Activated B cell treated with CpG ODN at 0.5 μM for 24 hours (primary cell): ENCODE measurements at regions of chr11 and their contacts with region 1.

Region 1: GRCh38 chr11:3841426-3842350 is 929 bp upstream of the RHOG start:
- DNase-seq: peak; percentile 96
- ATAC-seq: no peak
- H3K4me3 Mint-ChIP-seq: peak overlapping the region; percentile 91
- H3K27ac Mint-ChIP-seq: peak overlapping the region; percentile 95
- H3K4me1 Mint-ChIP-seq: peaks cover 46% of the 10 kb centered on the region
- H3K27me3 Mint-ChIP-seq: no peaks in the 10 kb centered on the region
- CTCF ChIP-seq: no peak

Region 2: DNA sequence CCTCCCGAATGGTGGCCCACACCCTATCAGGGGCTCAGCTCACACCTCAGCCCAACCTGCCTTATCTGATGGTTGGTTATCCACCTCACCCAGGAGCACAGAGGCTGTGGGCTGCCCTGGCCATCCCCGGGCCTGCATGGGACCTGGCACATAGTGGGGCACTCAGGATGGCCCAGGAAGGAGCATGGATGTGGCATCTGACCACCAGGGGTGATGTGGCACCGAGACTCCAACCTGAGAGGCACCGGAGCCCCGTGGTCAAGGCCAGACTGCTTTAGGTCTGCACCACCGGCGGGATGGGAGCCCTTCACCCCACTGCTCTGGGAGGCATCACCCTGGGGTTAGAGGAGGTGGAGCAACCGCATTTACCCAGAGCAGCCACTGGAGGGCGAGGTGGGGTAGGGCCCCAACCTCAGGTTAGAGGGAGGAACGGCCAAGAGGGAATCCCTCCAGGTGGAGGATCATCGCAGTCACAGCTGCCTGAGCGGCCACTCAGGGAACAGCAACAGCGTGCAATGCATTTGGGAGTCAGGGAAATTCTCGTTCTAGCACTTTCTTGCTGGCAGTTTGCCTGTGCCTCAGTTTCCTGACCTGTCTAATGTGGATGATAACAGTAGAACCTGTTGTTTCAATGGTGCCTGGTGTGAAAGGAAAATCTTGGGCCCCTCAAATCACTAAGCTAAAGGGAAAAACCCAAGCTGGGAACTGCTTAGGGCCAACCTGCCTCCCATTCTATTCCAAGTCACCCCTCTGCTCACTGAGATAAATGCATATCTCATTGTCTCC is 731.6 kb before region 1 on chr11:
- CTCF ChIA-PET with region 1: no interaction called
- POLR2A ChIA-PET with region 1: no interaction called
- intact Hi-C with region 1: no loop called
- DNase-seq: peak; percentile 12
- ATAC-seq: peak; percentile 42
- H3K4me3 Mint-ChIP-seq: no peak overlapping the region
- H3K27ac Mint-ChIP-seq: no peak overlapping the region
- H3K4me1 Mint-ChIP-seq: no peaks in the 10 kb centered on the region
- H3K27me3 Mint-ChIP-seq: peaks cover 6% of the 10 kb centered on the region
- CTCF ChIP-seq: no peak

Region 3: GRCh38 chr11:3781423-3781822 is 60.3 kb before region 1 on chr11:
- CTCF ChIA-PET with region 1: interaction called, 9 read pairs
- POLR2A ChIA-PET with region 1: interaction called, 10 read pairs
- intact Hi-C with region 1: loop called (anchors 2 kb)
- DNase-seq: no peak
- ATAC-seq: no peak
- H3K4me3 Mint-ChIP-seq: no peak overlapping the region
- H3K27ac Mint-ChIP-seq: peak overlapping the region; percentile 56
- H3K4me1 Mint-ChIP-seq: peaks cover 46% of the 10 kb centered on the region
- H3K27me3 Mint-ChIP-seq: no peaks in the 10 kb centered on the region
- CTCF ChIP-seq: no peak

Region 4: DNA sequence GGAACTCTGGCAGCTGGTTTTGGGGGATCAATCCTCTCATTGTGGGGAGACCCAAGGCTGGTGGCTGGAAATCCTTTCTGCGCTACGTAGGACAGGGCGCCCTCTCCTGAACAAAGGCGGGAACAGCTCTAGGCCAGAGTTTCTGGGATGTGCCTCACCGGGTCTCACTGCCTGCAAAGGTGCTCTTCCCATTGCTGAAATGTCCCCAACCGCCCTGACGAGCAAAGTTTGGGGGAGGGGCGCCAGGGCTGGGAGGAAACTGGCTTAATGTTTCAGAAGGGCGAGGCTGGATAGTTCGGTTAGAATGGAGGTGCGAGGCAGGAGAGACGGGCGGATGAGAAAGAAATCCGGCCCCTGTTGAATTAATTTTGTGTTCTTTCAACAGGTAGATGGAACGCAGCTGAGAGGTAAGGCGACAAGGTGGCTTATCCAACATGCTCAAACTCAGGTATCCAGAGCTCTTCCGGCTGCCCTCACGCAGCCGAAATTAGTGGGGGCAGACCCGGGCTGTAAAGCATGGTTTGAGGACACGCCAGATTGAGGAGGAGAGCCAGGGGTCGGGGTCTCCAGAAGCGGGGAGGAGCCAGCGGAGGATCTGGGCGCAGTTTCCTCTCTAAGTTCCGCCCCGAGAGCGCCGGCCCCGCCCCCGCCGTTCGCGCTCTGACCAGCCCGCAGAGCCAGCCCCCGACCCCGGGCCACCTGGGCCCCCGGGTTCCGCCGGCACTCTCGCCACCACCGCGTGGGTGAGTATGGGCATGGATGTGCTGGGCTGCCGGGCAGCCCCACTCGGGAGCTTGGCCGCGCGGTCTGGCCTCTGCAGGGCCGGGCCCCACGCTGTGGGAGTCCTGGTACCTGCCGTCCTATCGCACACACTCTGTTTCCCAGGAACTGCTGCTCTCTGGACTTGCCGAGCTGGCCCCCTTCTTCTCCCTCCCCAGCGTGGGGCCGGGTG is 33.5 kb before region 1 on chr11 and contains the start of gene PGAP2:
- CTCF ChIA-PET with region 1: interaction called, 36 read pairs
- POLR2A ChIA-PET with region 1: interaction called, 46 read pairs
- intact Hi-C with region 1: loop called (anchors 1 kb)
- DNase-seq: peak; percentile 67
- ATAC-seq: peak; percentile 85
- H3K4me3 Mint-ChIP-seq: peak within 1 kb of the TSS; percentile 94
- H3K27ac Mint-ChIP-seq: peak within 1 kb of the TSS; percentile 68
- H3K4me1 Mint-ChIP-seq: peaks cover 13% of the 10 kb centered on the region
- H3K27me3 Mint-ChIP-seq: no peaks in the 10 kb centered on the region
- CTCF ChIP-seq: no peak
- total RNA-seq, gene PGAP2: 19.7 and 25.0 TPM in 2 replicates

Region 5: GRCh38 chr11:3867209-3868091 is 25.8 kb after region 1 on chr11:
- CTCF ChIA-PET with region 1: interaction called, 3 read pairs
- POLR2A ChIA-PET with region 1: interaction called, 22 read pairs
- intact Hi-C with region 1: no loop called
- DNase-seq: no peak
- ATAC-seq: peak; percentile 49
- H3K4me3 Mint-ChIP-seq: peak overlapping the region; percentile 12
- H3K27ac Mint-ChIP-seq: peak overlapping the region; percentile 69
- H3K4me1 Mint-ChIP-seq: peaks cover 87% of the 10 kb centered on the region
- H3K27me3 Mint-ChIP-seq: no peaks in the 10 kb centered on the region
- CTCF ChIP-seq: no peak

Region 6: DNA sequence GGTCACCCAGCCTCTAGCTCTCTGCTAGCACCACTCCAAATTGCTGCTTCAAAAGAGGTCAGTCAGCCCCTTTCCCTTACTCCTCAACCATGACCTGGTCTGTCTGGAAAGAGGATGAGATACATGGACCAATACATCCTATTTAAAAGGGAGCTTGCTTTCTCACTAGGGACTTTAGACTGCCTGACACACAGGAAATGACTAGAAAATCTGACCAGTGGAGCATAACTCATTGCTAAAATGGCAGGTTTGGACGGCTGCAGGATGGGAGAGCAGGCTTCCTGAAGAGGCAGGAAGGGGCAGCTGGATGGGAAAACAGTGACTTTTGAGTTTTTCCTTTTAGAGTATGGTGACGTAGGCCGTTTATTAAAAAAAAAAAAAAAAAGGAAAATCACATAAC is 39.0 kb after region 1 on chr11:
- CTCF ChIA-PET with region 1: interaction called, 5 read pairs
- POLR2A ChIA-PET with region 1: interaction called, 29 read pairs
- intact Hi-C with region 1: no loop called
- DNase-seq: no peak
- ATAC-seq: peak; percentile 80
- H3K4me3 Mint-ChIP-seq: peak overlapping the region; percentile 60
- H3K27ac Mint-ChIP-seq: peak overlapping the region; percentile 87
- H3K4me1 Mint-ChIP-seq: peaks cover 85% of the 10 kb centered on the region
- H3K27me3 Mint-ChIP-seq: no peaks in the 10 kb centered on the region
- CTCF ChIP-seq: no peak

Region 7: DNA sequence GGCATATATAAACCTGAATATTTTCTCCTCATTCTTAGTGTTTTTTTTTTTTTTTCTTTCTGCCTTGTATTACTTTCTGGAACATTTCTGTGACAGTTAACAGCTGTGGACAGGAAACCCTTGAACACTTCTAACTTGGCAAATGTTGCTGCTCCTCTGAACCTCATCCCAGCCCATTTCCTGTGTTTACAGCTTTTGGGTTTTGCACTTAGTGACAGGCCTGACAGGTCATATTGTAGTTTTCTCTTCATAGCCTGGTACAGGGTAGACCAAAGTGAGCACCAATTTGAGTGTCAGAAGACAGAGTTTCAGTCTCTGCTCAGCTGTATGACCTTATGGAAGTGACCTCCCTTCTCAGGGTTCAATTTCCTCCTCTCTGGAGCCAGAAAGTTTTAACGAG is 105.4 kb after region 1 on chr11:
- CTCF ChIA-PET with region 1: interaction called, 5 read pairs
- POLR2A ChIA-PET with region 1: interaction called, 10 read pairs
- intact Hi-C with region 1: no loop called
- DNase-seq: no peak
- ATAC-seq: peak; percentile 59
- H3K4me3 Mint-ChIP-seq: peak overlapping the region; percentile 13
- H3K27ac Mint-ChIP-seq: peak overlapping the region; percentile 70
- H3K4me1 Mint-ChIP-seq: peaks cover 92% of the 10 kb centered on the region
- H3K27me3 Mint-ChIP-seq: no peaks in the 10 kb centered on the region
- CTCF ChIP-seq: no peak

Region 8: DNA sequence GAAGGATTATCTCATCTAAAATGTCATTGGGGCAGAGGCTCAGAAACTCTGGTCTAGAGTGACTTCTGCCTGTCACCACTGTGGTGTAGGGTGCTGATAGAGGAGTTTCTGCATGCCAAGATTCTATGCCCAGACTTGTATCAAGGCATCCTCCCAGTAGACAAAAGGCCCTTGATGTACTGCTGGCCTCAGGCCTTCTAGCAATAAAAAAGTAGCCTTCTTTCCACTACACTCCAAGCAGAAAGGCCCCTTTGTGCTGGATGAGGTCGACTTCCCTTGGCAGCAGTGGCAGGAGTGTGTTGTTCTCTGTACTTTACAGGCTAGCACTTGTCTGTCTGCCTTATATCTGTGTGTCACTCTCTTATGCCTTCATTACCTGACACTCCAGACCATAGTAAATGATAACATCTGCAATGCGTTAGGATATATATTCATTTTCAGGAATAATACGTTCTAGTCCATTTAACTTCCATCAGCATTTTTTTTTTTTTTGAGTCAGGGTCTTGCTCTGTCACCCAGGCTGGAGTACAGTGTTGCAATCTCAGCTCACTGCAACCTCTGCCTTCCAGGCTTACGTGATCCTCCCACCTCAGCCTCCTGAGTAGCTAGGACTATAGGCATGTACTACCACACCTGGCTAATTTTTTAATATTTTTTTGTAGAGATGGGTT is 203.4 kb after region 1 on chr11:
- CTCF ChIA-PET with region 1: no interaction called
- POLR2A ChIA-PET with region 1: no interaction called
- intact Hi-C with region 1: no loop called
- DNase-seq: no peak
- ATAC-seq: no peak
- H3K4me3 Mint-ChIP-seq: no peak overlapping the region
- H3K27ac Mint-ChIP-seq: no peak overlapping the region
- H3K4me1 Mint-ChIP-seq: peaks cover 8% of the 10 kb centered on the region
- H3K27me3 Mint-ChIP-seq: no peaks in the 10 kb centered on the region
- CTCF ChIP-seq: no peak

Region 9: GRCh38 chr11:4072668-4073285 is 231.1 kb after region 1 on chr11:
- CTCF ChIA-PET with region 1: interaction called, 526 read pairs
- POLR2A ChIA-PET with region 1: interaction called, 21 read pairs
- intact Hi-C with region 1: loop called (anchors 2 kb)
- DNase-seq: no peak
- ATAC-seq: peak; percentile 79
- H3K4me3 Mint-ChIP-seq: no peak overlapping the region
- H3K27ac Mint-ChIP-seq: peak overlapping the region; percentile 77
- H3K4me1 Mint-ChIP-seq: peaks cover 18% of the 10 kb centered on the region
- H3K27me3 Mint-ChIP-seq: no peaks in the 10 kb centered on the region
- CTCF ChIP-seq: no peak